ENCODE measurements at regions of chr9 and their contacts with region 1.

Region 1: DNA sequence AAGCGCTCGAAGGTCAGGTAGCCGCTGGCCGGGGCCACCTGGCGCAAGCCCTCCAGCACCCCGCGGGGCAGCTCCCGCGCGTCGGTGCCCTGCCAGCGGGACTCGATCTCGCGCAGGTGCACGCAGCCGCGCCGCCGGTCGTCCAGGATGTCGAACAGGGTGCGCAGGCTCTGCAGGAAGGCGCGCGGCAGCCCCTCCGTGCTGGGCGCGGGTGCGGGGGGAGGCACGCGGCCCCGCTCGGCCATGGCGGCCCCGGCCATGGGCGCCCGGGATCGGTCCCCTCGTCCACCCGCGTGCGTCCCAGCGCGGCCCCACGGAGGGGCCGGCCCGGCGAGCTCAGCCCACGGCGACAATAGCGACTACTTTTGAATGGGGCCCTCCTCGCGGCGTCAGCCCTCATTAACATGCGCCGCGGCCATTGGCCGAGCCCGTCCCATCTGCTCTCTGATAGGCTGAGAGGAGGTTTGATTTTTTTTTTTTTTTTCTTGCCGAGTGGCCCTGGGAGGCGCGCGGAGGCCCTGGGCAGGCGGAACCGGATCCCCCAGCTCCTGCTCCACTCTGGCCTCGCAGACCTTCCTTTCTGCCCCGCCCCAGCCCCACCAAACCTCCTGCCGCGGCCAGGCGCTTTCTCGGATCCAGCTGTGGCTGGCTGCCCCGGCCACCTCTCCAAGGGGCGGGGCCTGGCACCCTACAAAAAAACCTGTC is at the start of gene SAPCD2:
- DNase-seq: peak; percentile 83
- ATAC-seq: peak; percentile 73
- H3K4me3 ChIP-seq: peak within 1 kb of the TSS; percentile 80 to 82
- H3K27ac ChIP-seq: peak within 1 kb of the TSS; percentile 64
- H3K4me1 ChIP-seq: peaks cover 24 to 42% of the 10 kb centered on the region in 2 experiments
- H3K27me3 ChIP-seq: no peaks in the 10 kb centered on the region
- CTCF ChIP-seq: no peak
- POLR2A ChIP-seq: peak; percentile 64
- RAD21 ChIP-seq: no peak
- total RNA-seq, gene SAPCD2: 71.7 TPM

Region 2: GRCh38 chr9:137029058-137029936 is 41.1 kb before region 1 on chr9:
- CTCF ChIA-PET with region 1: interaction called, 19 read pairs
- POLR2A ChIA-PET with region 1: interaction called, 6 read pairs
- RAD21 ChIA-PET with region 1: interaction called in 1 of 2 experiments, 3 read pairs
- intact Hi-C with region 1: no loop called
- DNase-seq: no peak
- ATAC-seq: peak; percentile 77
- H3K4me3 ChIP-seq: peak overlapping the region; percentile 56 to 70
- H3K27ac ChIP-seq: peak overlapping the region; percentile 85; the same call in 1 of the 2 replicates
- H3K4me1 ChIP-seq: peaks cover 32 to 49% of the 10 kb centered on the region in 2 experiments
- H3K27me3 ChIP-seq: no peaks in the 10 kb centered on the region
- CTCF ChIP-seq: peak in 2 of 3 experiments; percentile 87 to 97; a peak in 4 of 6 replicates
- POLR2A ChIP-seq: no peak
- RAD21 ChIP-seq: no peak

Region 3: GRCh38 chr9:137046098-137046787 is 24.1 kb before region 1 on chr9 and contains the start of gene NPDC1:
- CTCF ChIA-PET with region 1: interaction called, 57 read pairs
- POLR2A ChIA-PET with region 1: no interaction called
- RAD21 ChIA-PET with region 1: interaction called in 1 of 2 experiments, 4 read pairs
- intact Hi-C with region 1: loop called (anchors 1 kb)
- DNase-seq: peak; percentile 68
- ATAC-seq: peak; percentile 73
- H3K4me3 ChIP-seq: peak within 1 kb of the TSS; percentile 55 to 90
- H3K27ac ChIP-seq: peak within 1 kb of the TSS; percentile 77
- H3K4me1 ChIP-seq: peaks cover 12 to 26% of the 10 kb centered on the region in 2 experiments
- H3K27me3 ChIP-seq: no peaks in the 10 kb centered on the region
- CTCF ChIP-seq: peak in 2 of 3 experiments; percentile 82 to 86; a peak in 4 of 6 replicates
- POLR2A ChIP-seq: no peak
- RAD21 ChIP-seq: no peak
- total RNA-seq, gene NPDC1: 98.8 TPM

Region 4: GRCh38 chr9:137086531-137087408 is 16.4 kb after region 1 on chr9 and contains the start of gene MAN1B1:
- CTCF ChIA-PET with region 1: interaction called, 49 read pairs
- POLR2A ChIA-PET with region 1: interaction called, 43 read pairs
- RAD21 ChIA-PET with region 1: interaction called, 5 to 12 read pairs
- intact Hi-C with region 1: no loop called
- DNase-seq: peak; percentile 98
- ATAC-seq: peak; percentile 83
- H3K4me3 ChIP-seq: peak within 1 kb of the TSS; percentile 83 to 96
- H3K27ac ChIP-seq: peak within 1 kb of the TSS; percentile 98
- H3K4me1 ChIP-seq: peaks cover 38 to 56% of the 10 kb centered on the region in 2 experiments
- H3K27me3 ChIP-seq: no peaks in the 10 kb centered on the region
- CTCF ChIP-seq: no peak
- POLR2A ChIP-seq: no peak
- RAD21 ChIP-seq: no peak
- total RNA-seq, gene MAN1B1: 50.9 TPM

Region 5: DNA sequence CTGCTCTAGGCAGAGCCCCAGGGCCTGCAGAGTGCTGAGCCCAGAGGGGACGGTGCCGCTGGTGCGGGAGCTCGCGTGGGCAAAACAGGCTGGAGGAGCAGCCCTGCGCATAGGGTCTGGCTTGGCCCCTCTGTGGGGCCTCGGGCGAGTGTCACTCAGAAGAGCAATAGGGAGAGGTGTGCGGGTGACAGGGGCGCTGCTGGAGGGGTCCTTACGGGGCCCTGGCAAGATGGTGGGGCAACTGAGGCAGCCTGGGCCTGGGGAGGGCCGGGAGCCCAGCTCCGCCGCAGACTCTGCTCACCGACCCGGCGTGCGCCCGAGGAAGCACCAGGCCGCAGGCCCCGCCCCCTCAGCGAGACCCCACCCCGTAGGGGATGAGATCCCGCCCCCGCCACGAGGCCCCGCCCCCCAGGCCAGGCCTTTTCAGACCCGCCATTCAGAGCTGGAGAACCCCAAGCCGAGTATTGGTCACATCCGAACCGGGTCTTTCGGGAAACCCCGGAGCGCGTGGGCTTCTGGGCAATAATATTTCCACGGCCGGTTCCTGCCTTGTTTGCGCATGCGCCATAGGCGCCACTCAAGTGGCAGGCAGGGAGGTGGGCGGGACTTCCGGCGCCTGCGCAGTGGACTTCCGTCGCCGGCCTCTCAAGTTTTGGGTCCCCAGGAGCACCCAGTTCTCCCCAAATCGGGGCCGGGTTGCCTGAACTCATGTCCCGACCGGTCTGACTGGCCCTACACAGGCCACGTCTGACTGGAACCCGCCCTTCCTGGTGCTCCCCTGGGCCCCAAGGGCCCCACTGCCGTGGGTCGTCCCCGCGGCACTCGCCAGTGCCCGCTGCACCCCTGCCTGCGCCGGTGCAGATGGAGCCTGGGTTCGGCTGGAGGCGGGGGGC is 153.0 kb after region 1 on chr9:
- CTCF ChIA-PET with region 1: interaction called, 16 read pairs
- POLR2A ChIA-PET with region 1: no interaction called
- RAD21 ChIA-PET with region 1: no interaction called
- intact Hi-C with region 1: no loop called
- DNase-seq: peak; percentile 97
- ATAC-seq: peak; percentile 69
- H3K4me3 ChIP-seq: peak overlapping the region; percentile 82 to 99
- H3K27ac ChIP-seq: peak overlapping the region; percentile 98
- H3K4me1 ChIP-seq: peaks cover 48 to 79% of the 10 kb centered on the region in 2 experiments
- H3K27me3 ChIP-seq: no peaks in the 10 kb centered on the region
- CTCF ChIP-seq: no peak
- POLR2A ChIP-seq: peak; percentile 58
- RAD21 ChIP-seq: no peak

Region 6: DNA sequence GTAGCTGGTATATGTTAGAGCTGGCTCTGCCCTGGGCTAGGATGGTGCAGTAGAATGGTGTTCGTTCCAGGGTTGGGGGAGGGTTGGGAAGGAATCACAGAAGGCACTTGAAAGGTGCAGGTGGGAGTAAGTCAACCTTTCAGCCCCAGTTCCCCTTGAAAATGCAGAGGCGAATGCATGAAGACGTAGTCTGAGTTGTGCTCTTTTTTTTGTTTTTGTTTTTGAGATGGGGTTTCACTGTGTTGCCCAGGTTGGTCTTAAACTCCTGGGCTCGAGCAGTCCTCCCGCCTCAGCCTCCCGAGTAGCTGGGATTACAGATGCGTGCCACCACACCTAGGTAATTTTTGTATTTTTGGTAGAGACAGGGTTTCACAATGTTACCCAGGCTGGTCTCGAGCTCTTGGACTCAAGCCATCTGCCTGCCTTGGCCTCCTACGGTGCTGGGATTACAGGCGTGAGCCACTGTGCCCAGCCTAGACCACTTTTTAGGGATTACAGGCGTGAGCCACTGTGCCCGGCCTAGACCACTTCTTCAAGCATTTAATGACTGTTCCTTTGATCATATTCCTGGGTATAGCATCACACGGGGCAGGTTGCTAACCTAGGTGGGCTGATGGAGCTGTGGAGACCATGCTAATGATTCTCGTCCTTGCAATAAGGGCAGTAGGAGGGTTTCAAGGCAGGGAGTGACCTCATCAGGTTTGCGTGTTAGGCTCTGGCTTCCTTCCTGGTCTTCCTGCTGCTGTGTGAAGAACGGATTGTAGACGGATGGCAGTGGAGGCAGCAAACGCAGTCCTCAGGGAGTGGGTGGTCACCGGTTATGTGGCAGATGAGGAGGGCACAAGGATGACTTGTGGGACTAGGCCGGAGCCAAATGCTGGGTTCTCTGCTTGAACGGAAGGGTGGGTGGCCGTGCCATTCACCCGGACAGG is 562.1 kb after region 1 on chr9:
- CTCF ChIA-PET with region 1: no interaction called
- POLR2A ChIA-PET with region 1: no interaction called
- RAD21 ChIA-PET with region 1: no interaction called
- intact Hi-C with region 1: no loop called
- DNase-seq: no peak
- ATAC-seq: no peak
- H3K4me3 ChIP-seq: no peak overlapping the region
- H3K27ac ChIP-seq: no peak overlapping the region
- H3K4me1 ChIP-seq: no peaks in the 10 kb centered on the region
- H3K27me3 ChIP-seq: no peaks in the 10 kb centered on the region
- CTCF ChIP-seq: no peak
- POLR2A ChIP-seq: no peak
- RAD21 ChIP-seq: no peak